Gastrocnemius medialis (tissue), 4 donors: ENCODE measurements at regions of chr17 and their contacts with region 1.

Region 1: DNA sequence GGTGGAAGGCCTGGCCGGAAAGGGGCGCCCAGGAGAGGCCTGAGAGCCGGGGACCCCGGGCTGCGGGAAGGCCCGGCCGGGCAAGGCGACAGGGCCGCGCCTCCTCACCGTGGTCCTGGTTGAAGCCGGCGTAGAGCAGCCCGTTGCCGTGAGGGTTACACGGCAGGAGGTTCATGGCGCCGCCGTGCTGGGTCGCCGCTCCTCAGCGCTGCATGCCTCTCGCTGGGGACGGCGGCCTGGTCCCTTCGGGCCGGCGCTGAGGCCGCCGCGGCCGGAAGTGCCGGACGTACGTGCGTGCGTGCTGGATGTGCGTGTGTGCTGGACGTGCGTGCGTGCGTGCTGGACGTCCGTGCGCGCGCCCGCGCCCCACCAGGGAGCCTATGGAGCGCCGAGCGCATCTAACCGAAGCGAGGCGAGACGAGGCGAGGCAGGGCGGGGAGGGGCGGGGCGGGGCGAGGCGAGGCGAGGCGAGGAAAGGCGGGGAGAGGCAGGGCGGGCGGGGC is at the start of gene WDR45B:
- DNase-seq: peak; percentile 91 to 96
- ATAC-seq: peak; percentile 93 to 95
- H3K4me3 ChIP-seq: peak within 1 kb of the TSS; percentile 76 to 98 (median 92)
- H3K27ac ChIP-seq: peak within 1 kb of the TSS; percentile 92 to 100 (median 96)
- H3K4me1 ChIP-seq: peaks cover 31 to 37% of the 10 kb centered on the region in 2 donors
- H3K27me3 ChIP-seq: no peaks in the 10 kb centered on the region
- CTCF ChIP-seq: no peak
- POLR2A ChIP-seq: peak; percentile 98
- total RNA-seq, gene WDR45B: 28.0 to 39.2 (median 34.8) TPM

Region 2: GRCh38 chr17:82450170-82451106 is 197.8 kb before region 1 on chr17 and contains the start of gene CYBC1:
- in situ Hi-C with region 1: no loop called
- intact Hi-C with region 1: loop called (anchors 2 kb)
- DNase-seq: peak; percentile 83 to 88
- ATAC-seq: peak; percentile 94 to 95
- H3K4me3 ChIP-seq: peak within 1 kb of the TSS; percentile 67 to 100 (median 87)
- H3K27ac ChIP-seq: peak within 1 kb of the TSS; percentile 84 to 91 (median 89)
- H3K4me1 ChIP-seq: peaks cover 10 to 25% of the 10 kb centered on the region in 2 donors
- H3K27me3 ChIP-seq: no peaks in the 10 kb centered on the region
- CTCF ChIP-seq: no peak
- POLR2A ChIP-seq: peak; percentile 92 to 98
- total RNA-seq, gene CYBC1: 17.3 to 29.8 (median 19.3) TPM

Region 3: GRCh38 chr17:82592767-82593589 is 55.2 kb before region 1 on chr17:
- in situ Hi-C with region 1: no loop called
- intact Hi-C with region 1: loop called (anchors 1 kb)
- DNase-seq: peak; percentile 67 to 87
- ATAC-seq: peak; percentile 72 to 84
- H3K4me3 ChIP-seq: peak overlapping the region; percentile 60 to 80 (median 70)
- H3K27ac ChIP-seq: peak overlapping the region; percentile 87 to 92 (median 88)
- H3K4me1 ChIP-seq: peaks cover 26 to 31% of the 10 kb centered on the region in 2 donors
- H3K27me3 ChIP-seq: no peaks in the 10 kb centered on the region
- CTCF ChIP-seq: no peak
- POLR2A ChIP-seq: no peak

Region 4: GRCh38 chr17:82716203-82717010 is 68.2 kb after region 1 on chr17 and contains the start of gene FN3KRP:
- in situ Hi-C with region 1: no loop called
- intact Hi-C with region 1: loop called (anchors 5 kb)
- DNase-seq: peak; percentile 94 to 95
- ATAC-seq: peak; percentile 86 to 93
- H3K4me3 ChIP-seq: peak within 1 kb of the TSS; percentile 56 to 76 (median 70)
- H3K27ac ChIP-seq: peak within 1 kb of the TSS; percentile 67 to 85 (median 78)
- H3K4me1 ChIP-seq: peaks cover 26 to 27% of the 10 kb centered on the region in 2 donors
- H3K27me3 ChIP-seq: no peaks in the 10 kb centered on the region
- CTCF ChIP-seq: no peak
- POLR2A ChIP-seq: peak; percentile 46 to 60
- total RNA-seq, gene FN3KRP: 2.3 to 7.9 (median 3.9) TPM